Psoas muscle (tissue), 8 donors: ENCODE measurements at regions of chr2 and their contacts with region 1.

Region 1: GRCh38 chr2:85302121-85302520 is 25.7 kb downstream of the TGOLN2 start:
- DNase-seq: no peak
- ATAC-seq: peak in 2 of 4 donors; percentile 11 to 40
- H3K4me3 ChIP-seq: no peak overlapping the region
- H3K27ac ChIP-seq: no peak overlapping the region
- H3K4me1 ChIP-seq: no peaks in the 10 kb centered on the region
- H3K27me3 ChIP-seq: no peaks in the 10 kb centered on the region
- CTCF ChIP-seq: no peak

Region 2: DNA sequence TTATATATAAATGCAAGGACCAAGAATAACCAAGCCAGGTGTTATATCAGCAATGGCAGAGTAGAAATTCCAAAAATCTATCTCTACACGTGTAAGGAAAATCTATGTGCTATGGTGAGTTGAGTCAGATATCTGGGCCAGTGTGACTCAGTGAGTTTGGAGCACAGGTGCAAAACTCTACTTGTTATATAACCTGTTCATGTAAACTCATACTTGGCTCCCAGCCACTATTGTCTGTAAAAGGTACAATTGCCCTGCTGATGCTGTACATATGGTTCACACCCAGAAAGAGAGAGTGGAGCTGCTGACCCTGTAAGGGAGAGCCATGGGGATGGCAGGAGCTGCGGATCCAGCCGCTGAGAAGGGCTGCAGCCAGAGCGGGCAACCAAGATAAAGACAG is 533.3 kb before region 1 on chr2:
- intact Hi-C with region 1: no loop called
- DNase-seq: no peak
- ATAC-seq: no peak
- H3K4me3 ChIP-seq: no peak overlapping the region
- H3K27ac ChIP-seq: no peak overlapping the region
- H3K4me1 ChIP-seq: no peaks in the 10 kb centered on the region
- H3K27me3 ChIP-seq: no peaks in the 10 kb centered on the region
- CTCF ChIP-seq: no peak

Region 3: GRCh38 chr2:85066874-85067351 is 235.2 kb before region 1 on chr2:
- intact Hi-C with region 1: loop called in 1 of 2 experiments (anchors 1 kb)
- DNase-seq: peak; percentile 78 to 85
- ATAC-seq: peak; percentile 67 to 92 (median 84)
- H3K4me3 ChIP-seq: peak overlapping the region; percentile 42
- H3K27ac ChIP-seq: no peak overlapping the region
- H3K4me1 ChIP-seq: no peaks in the 10 kb centered on the region
- H3K27me3 ChIP-seq: peaks cover 0 to 6% (median 0%) of the 10 kb centered on the region in 3 donors
- CTCF ChIP-seq: peak; percentile 87